Tibial artery (tissue), 4 donors: ENCODE measurements at regions of chr14 and their contacts with region 1.

Region 1: GRCh38 chr14:76876076-76876475 is 49.9 kb downstream of the LRRC74A start:
- DNase-seq: no peak
- H3K4me3 ChIP-seq: no peak overlapping the region
- H3K27ac ChIP-seq: no peak overlapping the region
- H3K4me1 ChIP-seq: no peaks in the 10 kb centered on the region
- H3K27me3 ChIP-seq: peaks cover 0 to 7% of the 10 kb centered on the region in 2 donors
- CTCF ChIP-seq: peak; percentile 95 to 97

Region 2: GRCh38 chr14:76729953-76730505 is 146.0 kb before region 1 on chr14:
- intact Hi-C with region 1: no loop called
- DNase-seq: no peak
- H3K4me3 ChIP-seq: no peak overlapping the region
- H3K27ac ChIP-seq: no peak overlapping the region
- H3K4me1 ChIP-seq: no peaks in the 10 kb centered on the region
- H3K27me3 ChIP-seq: no peaks in the 10 kb centered on the region
- CTCF ChIP-seq: no peak

Region 3: DNA sequence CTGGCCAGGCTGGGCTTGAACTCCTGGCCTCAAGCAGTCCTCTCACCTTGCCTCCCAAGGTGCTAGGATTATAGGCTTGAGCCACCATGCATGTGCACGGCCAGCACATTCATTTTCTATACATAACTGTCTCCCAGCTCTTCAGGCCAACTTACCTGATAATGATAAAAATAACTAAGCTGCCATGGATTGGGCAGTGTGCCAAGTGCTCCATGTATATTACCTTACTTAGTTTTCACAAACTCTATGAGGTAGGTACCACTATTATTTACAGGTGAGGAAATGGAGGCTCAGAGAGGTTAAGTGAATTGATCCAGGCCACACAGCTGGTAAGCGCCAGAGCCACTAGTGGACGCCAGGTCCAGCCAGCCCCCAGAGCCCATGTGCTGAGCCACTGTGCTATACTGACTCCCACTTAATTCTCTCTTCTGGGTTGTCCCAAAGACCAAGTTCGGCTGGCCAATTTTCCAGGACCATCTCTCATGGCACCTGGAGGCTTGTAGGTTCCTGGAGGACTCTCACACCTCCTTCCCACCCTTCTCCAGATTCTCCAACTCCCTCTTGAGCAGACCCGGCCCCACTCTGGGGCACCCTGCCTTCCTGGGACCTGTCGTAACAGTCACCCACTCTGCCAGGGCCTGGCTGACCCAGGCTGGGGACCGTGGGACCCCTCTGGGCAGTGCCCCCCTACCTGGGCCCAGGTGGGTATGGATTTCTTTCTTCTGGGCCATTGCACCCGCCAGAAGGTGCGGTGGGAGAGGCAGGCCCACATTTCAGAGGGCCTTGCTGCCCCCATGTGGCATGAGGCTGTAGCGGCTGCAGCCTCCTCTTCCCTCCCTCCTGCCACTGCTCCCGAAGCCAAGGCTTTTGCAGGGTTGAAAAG is 191.8 kb after region 1 on chr14:
- intact Hi-C with region 1: loop called (anchors 1 kb)
- DNase-seq: peak; percentile 56 to 80
- H3K4me3 ChIP-seq: no peak overlapping the region
- H3K27ac ChIP-seq: no peak overlapping the region
- H3K4me1 ChIP-seq: peaks cover 0 to 18% (median 6%) of the 10 kb centered on the region in 4 donors
- H3K27me3 ChIP-seq: no peaks in the 10 kb centered on the region
- CTCF ChIP-seq: peak; percentile 86 to 91

Region 4: GRCh38 chr14:77314043-77314442 is 438.0 kb after region 1 on chr14:
- intact Hi-C with region 1: loop called (anchors 5 kb)
- DNase-seq: no peak
- H3K4me3 ChIP-seq: no peak overlapping the region
- H3K27ac ChIP-seq: no peak overlapping the region
- H3K4me1 ChIP-seq: peaks cover 0 to 35% (median 2%) of the 10 kb centered on the region in 4 donors
- H3K27me3 ChIP-seq: no peaks in the 10 kb centered on the region
- CTCF ChIP-seq: no peak